Naive thymus-derived CD4-positive, alpha-beta T cell (primary cell): ENCODE measurements at regions of chr16 and their contacts with region 1.

Region 1: DNA sequence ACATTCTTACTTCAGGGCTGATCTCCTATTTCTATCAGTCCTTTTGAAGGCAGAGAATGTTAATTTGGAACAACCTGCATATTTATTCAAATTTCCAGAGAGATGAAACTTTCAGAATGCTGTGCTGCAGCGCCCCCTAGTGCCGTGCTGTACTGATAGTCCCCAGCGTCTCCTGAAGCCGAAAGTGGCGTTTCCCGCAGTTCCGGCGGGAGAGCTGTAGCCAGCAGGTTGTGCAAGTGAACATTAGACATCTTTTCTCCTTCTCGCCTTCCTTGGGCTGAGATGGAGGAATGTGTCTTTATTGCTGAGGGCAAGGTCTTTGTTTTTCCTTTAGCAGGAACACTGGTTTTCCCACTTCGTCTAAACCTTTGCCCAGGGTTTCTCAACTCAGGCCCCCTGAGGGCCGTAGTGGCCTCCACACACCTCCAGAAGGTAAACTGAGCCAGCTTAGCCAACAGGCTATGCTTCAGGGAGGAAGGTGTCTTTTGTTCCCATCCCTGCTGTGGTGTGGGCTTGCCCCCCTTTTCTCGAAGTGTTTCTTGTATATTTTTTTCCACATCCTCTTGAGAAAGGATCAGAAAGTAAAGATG is 26.4 kb downstream of the USP10 start:
- DNase-seq: peak; percentile 61 to 83 (median 74)
- ATAC-seq: peak; percentile 92
- H3K4me3 ChIP-seq: no peak overlapping the region
- H3K4me3 Mint-ChIP-seq: peak overlapping the region in 8 of 10 donors; percentile 54 to 76 (median 60)
- H3K27ac ChIP-seq: no peak overlapping the region
- H3K27ac Mint-ChIP-seq: peak overlapping the region in 4 of 9 donors; percentile 6 to 41 (median 31)
- H3K4me1 ChIP-seq: peaks cover 8 to 26% of the 10 kb centered on the region in 2 donors
- H3K4me1 Mint-ChIP-seq: peaks cover 55 to 83% (median 69%) of the 10 kb centered on the region in 7 donors
- H3K27me3 ChIP-seq: no peaks in the 10 kb centered on the region
- H3K27me3 Mint-ChIP-seq: no peaks in the 10 kb centered on the region

Region 2: GRCh38 chr16:84449171-84450140 is 276.7 kb before region 1 on chr16:
- CTCF ChIA-PET with region 1: no interaction called
- POLR2A ChIA-PET with region 1: no interaction called
- intact Hi-C with region 1: no loop called
- DNase-seq: no peak
- ATAC-seq: no peak
- H3K4me3 ChIP-seq: no peak overlapping the region
- H3K4me3 Mint-ChIP-seq: no peak overlapping the region
- H3K27ac ChIP-seq: no peak overlapping the region
- H3K27ac Mint-ChIP-seq: no peak overlapping the region
- H3K4me1 ChIP-seq: no peaks in the 10 kb centered on the region
- H3K4me1 Mint-ChIP-seq: peaks cover 0 to 2% (median 0%) of the 10 kb centered on the region in 7 donors
- H3K27me3 ChIP-seq: no peaks in the 10 kb centered on the region
- H3K27me3 Mint-ChIP-seq: peaks cover 0 to 15% (median 8%) of the 10 kb centered on the region in 5 donors

Region 3: DNA sequence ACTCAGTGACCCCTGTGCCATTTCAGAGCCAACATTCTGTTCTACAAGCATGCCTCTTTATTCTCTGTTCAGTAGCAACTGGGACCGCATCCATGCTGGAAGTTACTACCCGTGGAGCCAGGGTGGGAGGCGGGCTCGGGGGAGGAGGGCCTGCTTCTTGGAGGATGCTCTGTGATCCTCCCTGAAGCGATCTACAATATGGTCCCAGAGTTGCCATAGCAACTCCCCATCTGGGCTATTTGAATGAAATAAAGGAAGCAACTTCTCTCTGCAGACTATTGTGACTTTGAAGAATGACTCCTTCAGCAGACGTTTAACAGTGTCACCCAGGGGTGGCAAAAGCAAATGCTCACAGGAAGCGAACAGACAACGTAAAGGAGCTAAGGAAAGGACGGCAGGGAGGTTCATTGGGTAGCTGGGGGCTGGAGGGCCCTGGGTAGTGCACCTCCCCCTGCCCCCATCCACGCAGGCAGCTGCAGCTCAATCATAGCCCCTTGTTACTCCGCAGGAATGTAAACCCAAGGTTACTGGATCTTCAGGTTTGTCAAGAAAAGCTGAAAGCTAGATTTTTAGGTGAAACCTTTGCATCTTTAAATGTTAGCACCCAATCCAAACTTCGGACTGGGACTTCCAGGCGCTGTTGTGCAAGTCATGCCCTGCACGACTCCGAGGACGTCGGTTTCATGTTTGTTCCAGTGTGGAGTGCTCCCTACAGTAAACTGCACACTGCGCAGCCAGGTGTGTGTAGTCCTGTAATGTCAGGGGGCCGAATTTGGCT is 170.6 kb before region 1 on chr16:
- CTCF ChIA-PET with region 1: no interaction called
- POLR2A ChIA-PET with region 1: no interaction called
- intact Hi-C with region 1: loop called in 1 of 2 experiments (anchors 2 kb)
- DNase-seq: peak in 5 of 9 donors; percentile 11 to 42 (median 34)
- ATAC-seq: no peak
- H3K4me3 ChIP-seq: no peak overlapping the region
- H3K4me3 Mint-ChIP-seq: peak overlapping the region in 6 of 10 donors; percentile 4 to 59 (median 32)
- H3K27ac ChIP-seq: peak overlapping the region; percentile 17
- H3K27ac Mint-ChIP-seq: peak overlapping the region in 8 of 9 donors; percentile 28 to 76 (median 66)
- H3K4me1 ChIP-seq: peaks cover 32 to 37% of the 10 kb centered on the region in 2 donors
- H3K4me1 Mint-ChIP-seq: peaks cover 13 to 52% (median 42%) of the 10 kb centered on the region in 7 donors
- H3K27me3 ChIP-seq: no peaks in the 10 kb centered on the region
- H3K27me3 Mint-ChIP-seq: no peaks in the 10 kb centered on the region

Region 4: DNA sequence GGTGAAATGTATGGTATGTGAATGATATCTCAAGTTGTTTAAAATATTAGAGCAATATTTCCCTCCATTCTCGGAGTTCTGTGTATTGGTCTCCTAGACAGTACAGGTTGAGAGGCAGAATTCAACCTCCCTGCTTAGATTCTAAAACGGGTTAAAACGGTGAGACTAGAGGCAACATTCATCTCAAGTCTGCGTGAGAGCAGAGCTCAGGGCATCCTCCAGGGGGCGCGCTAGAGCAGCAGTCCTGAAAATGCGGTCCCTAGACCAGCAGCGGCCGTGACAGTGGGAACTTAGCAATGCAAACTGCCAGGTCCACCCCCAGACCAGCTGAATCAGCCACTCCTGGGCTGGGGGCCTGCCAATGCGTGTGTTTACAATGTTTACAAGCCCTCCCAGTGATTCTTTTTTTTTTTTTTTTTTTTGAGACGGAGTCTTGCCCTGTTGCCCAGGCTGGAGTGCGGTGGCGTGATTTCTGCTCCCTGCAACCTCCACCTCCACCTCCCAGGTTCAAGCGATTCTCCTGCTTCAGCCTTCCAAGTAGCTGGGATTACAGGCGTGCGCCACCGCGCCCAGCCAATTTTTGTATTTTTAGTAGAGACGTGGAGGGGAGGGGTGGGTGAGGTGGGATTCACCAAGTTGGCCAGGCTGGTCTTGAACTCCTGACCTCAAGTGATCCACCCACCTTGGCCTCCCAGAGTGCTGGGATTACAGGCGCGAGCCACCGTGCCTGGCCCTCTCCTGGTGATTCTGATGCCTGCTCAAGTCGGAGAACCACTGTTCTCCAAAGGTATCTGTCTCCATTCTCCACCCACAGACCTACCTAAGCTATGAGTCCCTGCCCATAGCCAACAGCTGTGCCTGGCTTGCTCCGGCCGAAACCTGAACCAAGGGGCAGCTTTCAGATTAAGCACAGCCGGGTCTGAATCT is 53.6 kb before region 1 on chr16:
- CTCF ChIA-PET with region 1: interaction called, 30 read pairs
- POLR2A ChIA-PET with region 1: interaction called, 3 read pairs
- intact Hi-C with region 1: loop called (anchors 1 kb)
- DNase-seq: peak; percentile 58 to 85 (median 74)
- ATAC-seq: peak; percentile 96
- H3K4me3 ChIP-seq: no peak overlapping the region
- H3K4me3 Mint-ChIP-seq: no peak overlapping the region
- H3K27ac ChIP-seq: no peak overlapping the region
- H3K27ac Mint-ChIP-seq: peak overlapping the region in 3 of 9 donors; percentile 6 to 54 (median 52)
- H3K4me1 ChIP-seq: no peaks in the 10 kb centered on the region
- H3K4me1 Mint-ChIP-seq: peaks cover 5 to 17% (median 8%) of the 10 kb centered on the region in 7 donors
- H3K27me3 ChIP-seq: no peaks in the 10 kb centered on the region
- H3K27me3 Mint-ChIP-seq: peaks cover 0 to 19% (median 0%) of the 10 kb centered on the region in 5 donors

Region 5: GRCh38 chr16:84692451-84693214 is 33.5 kb before region 1 on chr16:
- CTCF ChIA-PET with region 1: interaction called, 11 read pairs
- POLR2A ChIA-PET with region 1: no interaction called
- intact Hi-C with region 1: no loop called
- DNase-seq: no peak
- ATAC-seq: no peak
- H3K4me3 ChIP-seq: no peak overlapping the region
- H3K4me3 Mint-ChIP-seq: no peak overlapping the region
- H3K27ac ChIP-seq: no peak overlapping the region
- H3K27ac Mint-ChIP-seq: no peak overlapping the region
- H3K4me1 ChIP-seq: no peaks in the 10 kb centered on the region
- H3K4me1 Mint-ChIP-seq: peaks cover 0 to 13% (median 0%) of the 10 kb centered on the region in 7 donors
- H3K27me3 ChIP-seq: no peaks in the 10 kb centered on the region
- H3K27me3 Mint-ChIP-seq: peaks cover 0 to 9% (median 0%) of the 10 kb centered on the region in 5 donors

Region 6: DNA sequence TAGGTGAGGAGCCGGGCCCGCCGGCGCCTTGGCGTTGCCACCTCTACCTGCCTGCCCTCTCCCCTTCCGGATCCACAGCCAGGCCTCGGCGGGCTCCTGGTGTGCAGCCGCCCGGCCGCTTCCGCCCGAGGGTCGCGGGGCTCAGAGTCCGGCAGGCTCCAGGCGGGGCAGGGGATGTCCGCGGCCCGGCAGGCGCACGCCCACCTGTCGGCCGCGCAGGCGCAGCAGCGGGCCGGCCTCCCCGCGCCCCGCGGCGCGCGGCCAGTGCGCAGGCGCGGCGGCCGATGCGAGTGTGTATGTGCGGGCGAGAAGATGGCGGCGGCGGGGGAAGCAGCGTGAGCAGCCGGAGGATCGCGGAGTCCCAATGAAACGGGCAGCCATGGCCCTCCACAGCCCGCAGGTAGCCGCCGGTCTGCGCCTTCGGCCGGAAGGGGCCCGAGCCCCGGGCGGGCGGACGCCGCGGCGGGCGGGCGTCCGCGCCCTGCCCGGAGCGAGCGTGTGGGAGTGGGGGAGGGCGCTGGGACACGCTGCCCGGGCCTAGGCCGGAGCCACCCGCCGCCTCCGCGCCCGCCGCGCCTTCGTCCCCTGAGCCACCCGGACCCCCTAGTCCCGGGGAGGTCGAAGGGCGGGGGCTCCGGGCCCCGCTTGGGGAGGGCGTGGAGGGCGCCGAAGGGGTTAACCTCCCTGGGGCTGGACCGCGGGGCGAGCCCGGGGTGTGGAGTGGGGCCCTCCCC is 26.3 kb before region 1 on chr16 and contains the start of gene USP10:
- CTCF ChIA-PET with region 1: interaction called, 11 read pairs
- POLR2A ChIA-PET with region 1: interaction called, 6 read pairs
- intact Hi-C with region 1: loop called (anchors 1 to 2 kb)
- DNase-seq: peak; percentile 75 to 93 (median 88)
- ATAC-seq: peak; percentile 91
- H3K4me3 ChIP-seq: peak within 1 kb of the TSS; percentile 61
- H3K4me3 Mint-ChIP-seq: peak within 1 kb of the TSS; percentile 92 to 99 (median 98)
- H3K27ac ChIP-seq: peak within 1 kb of the TSS; percentile 87
- H3K27ac Mint-ChIP-seq: peak within 1 kb of the TSS; percentile 92 to 99 (median 96)
- H3K4me1 ChIP-seq: peaks cover 11 to 22% of the 10 kb centered on the region in 2 donors
- H3K4me1 Mint-ChIP-seq: peaks cover 19 to 46% (median 42%) of the 10 kb centered on the region in 7 donors
- H3K27me3 ChIP-seq: no peaks in the 10 kb centered on the region
- H3K27me3 Mint-ChIP-seq: peaks cover 0 to 4% (median 0%) of the 10 kb centered on the region in 5 donors
- total RNA-seq, gene USP10: 88.4 to 113 (median 112) TPM

Region 7: DNA sequence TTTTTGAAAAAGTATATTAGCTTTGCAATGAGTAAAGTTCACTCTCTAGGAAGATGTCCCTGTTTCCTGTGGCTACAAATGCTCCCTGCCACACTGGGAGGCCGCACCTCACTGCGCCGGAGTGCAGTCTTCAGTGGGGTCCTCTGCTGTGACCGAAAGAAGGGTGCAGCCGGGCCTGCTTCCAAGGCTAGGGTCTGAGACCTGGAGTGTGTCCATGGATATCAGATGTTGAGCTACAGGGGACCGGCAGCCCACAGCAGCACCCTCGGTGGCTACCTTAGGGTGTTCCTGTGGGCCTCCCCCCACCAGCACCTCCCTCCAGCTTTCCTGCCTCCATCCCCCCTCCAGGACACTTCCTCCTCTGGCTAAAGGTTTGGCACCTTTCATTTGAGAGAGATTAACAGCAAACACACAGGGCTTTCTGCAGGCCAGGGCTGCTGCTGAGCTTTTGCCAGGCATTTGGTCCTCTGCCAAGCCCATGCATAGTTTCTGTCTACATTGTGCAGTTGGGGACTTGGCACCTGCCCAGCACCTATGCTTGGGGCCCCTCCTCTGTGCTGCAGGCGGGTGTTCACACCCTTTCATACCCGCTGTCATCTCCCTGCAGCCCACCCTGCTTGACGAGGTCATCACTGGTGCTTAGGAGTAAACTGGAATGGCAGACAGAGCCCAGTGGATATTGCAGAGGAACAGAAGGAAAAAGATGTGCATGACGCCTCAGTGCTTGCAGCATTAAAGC is 59.8 kb after region 1 on chr16:
- CTCF ChIA-PET with region 1: no interaction called
- POLR2A ChIA-PET with region 1: no interaction called
- intact Hi-C with region 1: no loop called
- DNase-seq: no peak
- ATAC-seq: no peak
- H3K4me3 ChIP-seq: no peak overlapping the region
- H3K4me3 Mint-ChIP-seq: no peak overlapping the region
- H3K27ac ChIP-seq: no peak overlapping the region
- H3K27ac Mint-ChIP-seq: no peak overlapping the region
- H3K4me1 ChIP-seq: no peaks in the 10 kb centered on the region
- H3K4me1 Mint-ChIP-seq: peaks cover 0 to 4% (median 0%) of the 10 kb centered on the region in 7 donors
- H3K27me3 ChIP-seq: no peaks in the 10 kb centered on the region
- H3K27me3 Mint-ChIP-seq: no peaks in the 10 kb centered on the region

Region 8: GRCh38 chr16:84806256-84806889 is 80.2 kb after region 1 on chr16:
- CTCF ChIA-PET with region 1: no interaction called
- POLR2A ChIA-PET with region 1: no interaction called
- intact Hi-C with region 1: no loop called
- DNase-seq: peak in 1 of 9 donors; percentile 32
- ATAC-seq: peak; percentile 86
- H3K4me3 ChIP-seq: no peak overlapping the region
- H3K4me3 Mint-ChIP-seq: peak overlapping the region in 4 of 10 donors; percentile 25 to 63 (median 43)
- H3K27ac ChIP-seq: no peak overlapping the region
- H3K27ac Mint-ChIP-seq: no peak overlapping the region
- H3K4me1 ChIP-seq: peaks cover 0 to 10% of the 10 kb centered on the region in 2 donors
- H3K4me1 Mint-ChIP-seq: peaks cover 4 to 25% (median 10%) of the 10 kb centered on the region in 7 donors
- H3K27me3 ChIP-seq: no peaks in the 10 kb centered on the region
- H3K27me3 Mint-ChIP-seq: peaks cover 0 to 7% (median 0%) of the 10 kb centered on the region in 5 donors